B cell (primary cell): ENCODE measurements at regions of chr4 and their contacts with region 1.

Region 1: GRCh38 chr4:986879-987623 is at the start of gene IDUA:
- DNase-seq: peak; percentile 93
- ATAC-seq: peak; percentile 84
- H3K4me3 ChIP-seq: peak within 1 kb of the TSS; percentile 52 to 83 (median 68)
- H3K4me3 Mint-ChIP-seq: peak within 1 kb of the TSS; percentile 91
- H3K27ac ChIP-seq: peak within 1 kb of the TSS; percentile 19 to 76
- H3K27ac Mint-ChIP-seq: peak within 1 kb of the TSS; percentile 88
- H3K4me1 ChIP-seq: peaks cover 25 to 26% of the 10 kb centered on the region in 2 donors
- H3K4me1 Mint-ChIP-seq: peaks cover 23% of the 10 kb centered on the region
- H3K27me3 ChIP-seq: no peaks in the 10 kb centered on the region
- H3K27me3 Mint-ChIP-seq: no peaks in the 10 kb centered on the region
- CTCF ChIP-seq: peak; percentile 82
- total RNA-seq, gene IDUA: 57.8 and 67.4 TPM in 2 replicates

Region 2: DNA sequence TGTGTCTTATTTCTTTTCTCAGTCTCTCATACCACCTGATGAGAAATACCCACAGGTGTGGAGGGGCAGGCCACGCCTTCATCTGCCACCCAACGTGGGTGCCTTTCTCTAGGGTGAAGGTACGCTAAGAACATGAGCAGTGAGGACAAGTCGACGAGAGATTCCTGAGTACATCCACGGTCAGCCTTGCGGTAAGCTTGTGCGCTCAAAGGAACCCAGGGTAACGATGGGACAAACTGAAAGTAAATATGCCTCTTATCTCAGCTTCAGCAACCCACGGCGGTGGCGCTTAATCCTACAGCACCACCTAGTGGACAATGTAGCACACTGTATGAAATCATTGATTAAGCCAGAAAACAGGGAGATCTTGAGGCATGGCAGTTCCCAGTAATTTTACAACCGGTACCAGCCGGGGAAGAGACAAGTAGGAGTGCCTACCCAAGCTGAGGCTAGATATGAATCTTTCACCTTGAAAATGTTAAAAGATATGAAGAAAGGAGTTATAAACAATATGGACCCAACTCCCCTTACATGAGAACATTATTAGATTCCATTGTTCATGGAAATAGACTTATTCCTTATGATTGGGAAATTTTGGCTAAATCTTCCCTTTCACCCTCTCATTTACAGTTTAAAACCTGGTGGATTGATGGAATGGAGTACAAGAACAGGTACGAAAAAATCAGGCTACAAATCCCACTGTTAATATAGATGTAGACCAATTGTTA is 744.8 kb before region 1 on chr4:
- CTCF ChIA-PET with region 1: interaction called, 4 read pairs
- POLR2A ChIA-PET with region 1: no interaction called
- intact Hi-C with region 1: loop called (anchors 10 kb)
- DNase-seq: peak; percentile 87
- ATAC-seq: peak; percentile 95
- H3K4me3 ChIP-seq: peak overlapping the region in 4 of 5 experiments; percentile 40 to 72 (median 50)
- H3K4me3 Mint-ChIP-seq: peak overlapping the region; percentile 92
- H3K27ac ChIP-seq: peak overlapping the region; percentile 57 to 70
- H3K27ac Mint-ChIP-seq: peak overlapping the region; percentile 92
- H3K4me1 ChIP-seq: peaks cover 5 to 13% of the 10 kb centered on the region in 2 donors
- H3K4me1 Mint-ChIP-seq: peaks cover 13% of the 10 kb centered on the region
- H3K27me3 ChIP-seq: no peaks in the 10 kb centered on the region
- H3K27me3 Mint-ChIP-seq: no peaks in the 10 kb centered on the region
- CTCF ChIP-seq: peak; percentile 88

Region 3: DNA sequence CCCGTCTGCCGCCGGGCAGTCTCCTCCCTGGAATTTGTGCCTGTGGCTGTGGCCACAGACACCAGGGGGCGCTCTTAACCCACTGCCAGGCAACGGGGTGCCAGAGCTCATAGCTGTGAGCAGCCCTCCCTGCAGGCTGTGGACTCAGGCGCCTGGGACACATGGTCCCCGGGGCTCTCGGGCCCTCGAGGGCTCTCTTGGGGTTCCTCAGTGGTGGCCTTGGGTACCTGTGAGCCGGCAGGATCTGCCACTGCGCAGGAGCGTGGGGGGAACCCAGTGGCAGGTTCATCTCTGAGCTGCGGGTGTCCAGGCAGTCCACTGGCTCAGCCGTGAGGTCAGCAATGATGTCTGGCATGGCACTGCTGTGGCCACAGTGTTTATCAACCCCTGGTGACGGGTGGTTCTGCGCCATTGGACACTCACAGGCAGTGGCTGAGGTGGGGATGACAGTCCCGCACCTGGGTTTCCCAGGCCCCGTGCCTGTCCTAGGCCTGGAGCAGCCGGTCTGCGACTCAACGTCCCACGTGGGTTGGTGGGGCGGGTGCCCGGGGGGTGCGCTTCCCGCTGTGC is 244.2 kb before region 1 on chr4:
- CTCF ChIA-PET with region 1: interaction called, 90 read pairs
- POLR2A ChIA-PET with region 1: interaction called, 3 read pairs
- intact Hi-C with region 1: loop called (anchors 2 kb)
- DNase-seq: peak; percentile 80
- ATAC-seq: peak; percentile 91
- H3K4me3 ChIP-seq: no peak overlapping the region
- H3K4me3 Mint-ChIP-seq: no peak overlapping the region
- H3K27ac ChIP-seq: no peak overlapping the region
- H3K27ac Mint-ChIP-seq: no peak overlapping the region
- H3K4me1 ChIP-seq: peaks cover 0 to 8% of the 10 kb centered on the region in 2 donors
- H3K4me1 Mint-ChIP-seq: peaks cover 2% of the 10 kb centered on the region
- H3K27me3 ChIP-seq: no peaks in the 10 kb centered on the region
- H3K27me3 Mint-ChIP-seq: no peaks in the 10 kb centered on the region
- CTCF ChIP-seq: peak; percentile 95

Region 4: DNA sequence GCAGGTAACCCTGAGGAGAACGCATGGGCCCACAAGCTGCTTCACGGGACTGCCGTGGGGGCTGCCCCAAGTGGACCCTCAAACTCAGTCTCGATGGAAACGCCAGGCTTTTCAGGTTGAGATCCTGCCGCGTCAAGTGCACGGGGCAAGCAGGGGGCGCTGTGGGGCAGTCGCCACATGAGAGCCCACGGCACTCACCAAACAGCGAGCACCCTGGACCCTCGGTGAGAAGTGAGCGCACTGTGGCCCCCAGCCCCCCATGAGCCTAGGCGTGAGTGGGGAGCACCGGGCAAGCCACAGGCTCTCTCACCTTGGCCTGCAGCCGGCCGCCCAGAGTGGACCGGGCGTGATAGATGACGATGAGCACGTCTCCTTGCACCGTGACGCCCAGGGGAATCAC is 110.3 kb before region 1 on chr4:
- CTCF ChIA-PET with region 1: interaction called, 7 read pairs
- POLR2A ChIA-PET with region 1: no interaction called
- intact Hi-C with region 1: loop called (anchors 1 kb)
- DNase-seq: peak; percentile 44
- ATAC-seq: no peak
- H3K4me3 ChIP-seq: no peak overlapping the region
- H3K4me3 Mint-ChIP-seq: no peak overlapping the region
- H3K27ac ChIP-seq: no peak overlapping the region
- H3K27ac Mint-ChIP-seq: no peak overlapping the region
- H3K4me1 ChIP-seq: no peaks in the 10 kb centered on the region
- H3K4me1 Mint-ChIP-seq: no peaks in the 10 kb centered on the region
- H3K27me3 ChIP-seq: no peaks in the 10 kb centered on the region
- H3K27me3 Mint-ChIP-seq: no peaks in the 10 kb centered on the region
- CTCF ChIP-seq: peak; percentile 31

Region 5: DNA sequence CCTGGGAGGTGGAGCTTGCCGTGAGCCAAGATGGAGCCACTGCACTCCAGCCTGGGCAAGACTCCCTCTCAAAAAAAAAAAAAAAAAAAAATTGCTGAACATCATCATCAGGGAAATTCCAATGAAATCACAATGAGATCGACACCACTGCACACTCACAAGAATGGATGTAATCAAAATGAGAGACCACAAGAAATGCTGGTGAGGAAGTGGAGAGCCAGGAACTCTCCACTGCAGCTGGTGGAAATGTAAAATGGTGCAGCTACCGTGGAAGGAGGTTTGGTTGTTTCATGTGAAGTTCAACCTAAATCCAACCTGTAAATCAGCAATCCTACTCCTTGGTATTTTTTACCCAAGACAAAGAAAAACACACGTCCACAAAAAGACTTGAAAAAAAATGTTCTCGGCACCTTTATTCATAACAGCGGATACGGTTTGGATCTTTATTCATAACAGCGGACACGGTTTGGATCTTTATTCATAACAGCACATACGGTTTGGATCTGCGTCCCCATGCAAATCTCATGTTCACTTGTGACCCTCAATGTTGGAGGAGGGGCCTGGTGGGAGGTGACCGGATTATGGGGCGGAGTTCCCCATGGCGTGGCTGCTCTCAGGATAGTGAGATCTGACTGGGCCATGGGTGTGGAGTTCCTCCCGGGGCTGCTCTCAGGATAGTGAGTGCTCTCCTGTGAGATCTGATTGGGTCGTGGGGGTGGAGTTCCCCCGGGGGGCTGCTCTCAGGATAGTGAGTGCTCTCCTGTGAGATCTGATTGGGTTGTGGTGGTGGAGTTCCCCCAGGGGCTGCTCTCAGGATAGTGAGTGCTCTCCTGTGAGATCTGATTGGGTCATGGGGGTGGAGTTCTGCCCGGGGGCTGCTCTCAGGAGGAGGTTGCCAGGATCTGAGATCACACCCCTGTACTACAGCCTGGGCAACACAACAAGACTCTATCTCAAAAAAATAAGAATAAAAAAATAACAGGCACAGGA is 62.6 kb before region 1 on chr4:
- CTCF ChIA-PET with region 1: interaction called, 68 read pairs
- POLR2A ChIA-PET with region 1: interaction called, 6 read pairs
- intact Hi-C with region 1: loop called (anchors 2 kb)
- DNase-seq: peak; percentile 60
- ATAC-seq: peak; percentile 22
- H3K4me3 ChIP-seq: no peak overlapping the region
- H3K4me3 Mint-ChIP-seq: peak overlapping the region; percentile 51
- H3K27ac ChIP-seq: peak overlapping the region; percentile 89 to 93
- H3K27ac Mint-ChIP-seq: peak overlapping the region; percentile 77
- H3K4me1 ChIP-seq: peaks cover 62 to 77% of the 10 kb centered on the region in 2 donors
- H3K4me1 Mint-ChIP-seq: peaks cover 71% of the 10 kb centered on the region
- H3K27me3 ChIP-seq: no peaks in the 10 kb centered on the region
- H3K27me3 Mint-ChIP-seq: no peaks in the 10 kb centered on the region
- CTCF ChIP-seq: no peak

Region 6: DNA sequence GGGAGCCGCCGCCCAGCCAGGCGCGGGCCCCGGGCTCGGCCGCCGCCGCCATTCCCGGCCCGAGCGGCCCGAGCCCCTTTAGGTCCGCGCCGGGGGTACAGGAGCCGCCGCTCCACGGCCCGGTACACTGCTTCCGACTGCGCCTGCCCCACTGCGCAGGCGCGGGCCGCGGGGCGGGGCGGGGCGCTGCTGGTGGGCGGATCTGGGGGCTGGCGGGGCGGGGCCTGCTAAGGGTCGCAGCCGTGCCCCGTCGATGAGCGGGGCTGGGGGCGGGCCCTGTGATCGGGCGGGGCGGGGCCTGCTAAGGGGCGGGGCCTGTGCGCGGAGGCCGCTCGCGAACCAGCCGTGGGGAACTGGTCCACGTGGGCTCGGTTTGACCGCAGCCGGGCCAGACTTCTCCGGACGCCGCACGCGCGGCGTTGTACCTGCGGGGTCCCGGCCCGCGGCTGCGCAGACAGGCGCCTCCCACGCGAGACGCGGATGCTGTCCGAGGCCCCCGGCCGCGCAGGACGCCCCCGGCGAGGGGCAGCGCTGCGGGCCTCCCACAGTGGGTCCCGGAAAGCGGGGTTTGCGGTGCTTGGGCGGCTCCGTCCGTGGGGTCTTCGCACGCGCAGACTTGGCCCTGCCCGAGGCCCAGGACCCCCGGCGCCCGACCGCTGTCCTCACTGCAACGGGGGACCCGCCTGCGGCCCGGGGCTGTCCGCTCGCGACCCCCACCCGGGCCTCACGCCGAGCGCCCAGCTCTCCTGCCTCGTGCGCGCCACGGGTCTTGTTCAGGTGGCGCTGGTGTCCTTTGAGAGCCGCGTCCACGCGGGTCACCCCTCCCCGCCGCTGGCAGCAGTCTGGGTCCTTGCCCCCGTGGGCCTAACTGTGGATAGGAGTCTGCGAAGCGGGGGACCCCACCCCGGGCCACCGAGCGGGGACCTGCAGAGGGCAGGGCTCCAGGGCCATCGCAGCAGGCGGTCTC is 13.3 kb before region 1 on chr4 and contains the start of gene DGKQ:
- CTCF ChIA-PET with region 1: interaction called, 5 read pairs
- POLR2A ChIA-PET with region 1: no interaction called
- intact Hi-C with region 1: loop called (anchors 1 kb)
- DNase-seq: peak; percentile 92
- ATAC-seq: peak; percentile 99
- H3K4me3 ChIP-seq: peak within 1 kb of the TSS; percentile 23 to 76 (median 66)
- H3K4me3 Mint-ChIP-seq: peak within 1 kb of the TSS; percentile 61
- H3K27ac ChIP-seq: no peak within 1 kb of the TSS
- H3K27ac Mint-ChIP-seq: peak within 1 kb of the TSS; percentile 41
- H3K4me1 ChIP-seq: peaks cover 10 to 17% of the 10 kb centered on the region in 2 donors
- H3K4me1 Mint-ChIP-seq: peaks cover 9% of the 10 kb centered on the region
- H3K27me3 ChIP-seq: peaks cover 0 to under 1% (median 0%) of the 10 kb centered on the region in 4 experiments
- H3K27me3 Mint-ChIP-seq: no peaks in the 10 kb centered on the region
- CTCF ChIP-seq: no peak
- total RNA-seq, gene DGKQ: 30.4 and 34.9 TPM in 2 replicates

Region 7: DNA sequence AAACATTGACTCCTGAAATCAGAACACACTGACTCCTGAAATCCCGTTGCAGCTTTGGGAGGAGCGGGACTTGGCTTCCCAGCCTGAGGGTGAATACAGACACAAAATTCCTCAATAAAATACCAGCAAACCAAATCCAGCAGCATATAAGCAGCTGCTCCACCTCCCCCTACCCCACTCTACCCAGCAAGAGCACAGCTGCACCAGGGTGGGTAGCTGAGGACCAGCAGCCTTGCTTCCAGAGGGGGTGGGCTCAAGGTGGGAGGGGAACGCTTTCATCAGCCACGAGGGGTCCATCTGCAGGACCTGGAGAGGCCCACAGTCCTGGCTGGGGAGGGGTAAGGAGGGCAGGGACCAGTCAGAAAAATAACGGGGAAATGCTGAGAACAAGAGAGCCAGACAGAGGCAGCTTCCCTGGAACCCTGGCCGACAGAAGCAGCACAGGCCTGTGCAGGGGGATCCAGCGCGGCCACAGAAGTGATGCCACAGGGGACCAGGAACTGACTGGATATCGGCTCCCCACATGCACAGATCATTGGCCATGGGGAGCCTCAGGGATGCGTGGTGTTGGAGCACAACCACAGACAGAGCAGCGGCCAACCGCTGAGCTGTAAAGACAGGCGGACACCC is 74.1 kb after region 1 on chr4:
- CTCF ChIA-PET with region 1: no interaction called
- POLR2A ChIA-PET with region 1: no interaction called
- intact Hi-C with region 1: no loop called
- DNase-seq: no peak
- ATAC-seq: no peak
- H3K4me3 ChIP-seq: no peak overlapping the region
- H3K4me3 Mint-ChIP-seq: no peak overlapping the region
- H3K27ac ChIP-seq: no peak overlapping the region
- H3K27ac Mint-ChIP-seq: no peak overlapping the region
- H3K4me1 ChIP-seq: peaks cover 6 to 7% of the 10 kb centered on the region in 2 donors
- H3K4me1 Mint-ChIP-seq: peaks cover 2% of the 10 kb centered on the region
- H3K27me3 ChIP-seq: peaks cover 0 to 32% (median 3%) of the 10 kb centered on the region in 4 experiments
- H3K27me3 Mint-ChIP-seq: peaks cover 35% of the 10 kb centered on the region
- CTCF ChIP-seq: no peak